ENCODE measurements at regions of chr6 and their contacts with region 1.

Region 1: DNA sequence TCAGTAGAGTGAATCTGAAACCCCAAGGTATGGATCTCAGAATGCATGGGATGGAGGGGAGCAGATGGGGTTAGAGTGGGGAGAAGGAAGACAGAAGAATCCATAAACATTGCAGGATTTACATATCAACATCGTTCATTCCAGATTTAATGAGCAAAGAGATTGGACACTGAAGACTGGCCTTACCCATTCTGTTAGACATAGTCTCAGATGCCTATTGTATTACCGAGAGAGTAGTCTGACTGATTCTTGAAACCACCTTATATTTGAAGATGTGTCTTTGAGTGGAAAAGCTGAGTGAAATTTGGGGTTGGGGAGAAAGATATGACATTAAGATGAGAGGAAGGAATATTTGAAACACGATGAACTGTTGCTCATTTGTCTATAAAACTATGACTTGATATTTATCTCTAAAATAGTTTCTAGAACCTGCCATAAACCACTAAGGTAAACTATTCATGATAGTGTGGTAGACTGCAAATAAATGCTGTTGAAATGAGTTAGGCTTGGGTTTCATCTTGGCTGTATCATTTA is 5.7 kb downstream of the HLA-DRA start:
- DNase-seq: no peak
- ATAC-seq: peak; percentile 44
- H3K4me3 ChIP-seq: no peak overlapping the region
- H3K27ac ChIP-seq: no peak overlapping the region
- H3K4me1 ChIP-seq: peaks cover 4% of the 10 kb centered on the region; the same call in 1 of the 2 replicates
- H3K27me3 ChIP-seq: no peaks in the 10 kb centered on the region
- CTCF ChIP-seq: no peak
- EP300 ChIP-seq: no peak
- POLR2A ChIP-seq: no peak; the same call in 1 of the 2 replicates
- RAD21 ChIP-seq: no peak

Region 2: DNA sequence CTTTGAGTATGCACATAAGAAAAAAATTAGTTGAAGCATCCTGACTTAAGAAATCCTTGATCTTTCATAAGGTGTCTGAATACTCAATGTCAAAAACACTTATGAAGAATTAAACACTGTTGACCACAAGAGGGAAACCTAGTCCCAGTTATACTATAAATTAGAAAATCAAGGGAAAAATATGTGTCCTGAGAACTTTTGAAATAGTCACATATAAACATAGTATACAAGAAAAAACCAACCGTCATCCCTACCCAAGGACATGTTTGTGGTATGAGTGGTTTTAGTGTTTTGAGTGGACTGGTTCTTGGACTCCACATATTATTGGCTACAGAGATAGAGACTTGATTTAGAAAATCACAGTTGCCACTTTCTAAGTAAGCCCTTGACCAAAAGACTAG is 13.3 kb before region 1 on chr6:
- CTCF ChIA-PET with region 1: interaction called, 8 read pairs
- POLR2A ChIA-PET with region 1: interaction called, 3 read pairs
- RAD21 ChIA-PET with region 1: interaction called, 10 read pairs
- SMC1A ChIA-PET with region 1: interaction called, 6 read pairs
- in situ Hi-C with region 1: no loop called
- intact Hi-C with region 1: no loop called
- DNase-seq: no peak
- ATAC-seq: peak; percentile 55
- H3K4me3 ChIP-seq: no peak overlapping the region
- H3K27ac ChIP-seq: no peak overlapping the region
- H3K4me1 ChIP-seq: peaks cover 10% of the 10 kb centered on the region
- H3K27me3 ChIP-seq: no peaks in the 10 kb centered on the region
- CTCF ChIP-seq: peak in 2 of 3 experiments; percentile 41 to 62; a peak in 4 of 6 replicates
- EP300 ChIP-seq: no peak
- POLR2A ChIP-seq: no peak
- RAD21 ChIP-seq: peak; percentile 76

Region 3: DNA sequence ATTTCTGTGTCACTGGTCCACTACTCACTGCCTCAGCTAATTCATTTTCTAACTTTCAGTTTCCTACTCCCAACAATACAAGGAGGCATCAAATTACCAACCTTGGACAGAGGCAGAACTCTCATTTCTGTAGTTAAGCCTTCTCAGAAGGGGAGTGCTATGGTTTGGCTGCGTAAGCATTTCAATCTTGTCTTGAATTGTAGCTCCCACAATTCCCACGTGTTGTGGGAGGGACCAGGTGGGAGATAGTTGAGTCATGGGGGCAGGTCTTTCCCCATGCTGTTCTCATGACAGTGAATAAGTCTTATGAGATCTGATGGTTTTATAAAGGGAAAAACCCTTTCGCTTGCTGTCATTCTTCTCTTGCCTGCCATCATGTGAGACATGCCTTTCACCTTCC is 17.2 kb after region 1 on chr6:
- CTCF ChIA-PET with region 1: interaction called, 47 read pairs
- POLR2A ChIA-PET with region 1: interaction called, 64 read pairs
- RAD21 ChIA-PET with region 1: interaction called, 23 read pairs
- SMC1A ChIA-PET with region 1: interaction called, 27 read pairs
- in situ Hi-C with region 1: no loop called
- intact Hi-C with region 1: no loop called
- DNase-seq: peak; percentile 76
- ATAC-seq: peak; percentile 94
- H3K4me3 ChIP-seq: no peak overlapping the region
- H3K27ac ChIP-seq: no peak overlapping the region
- H3K4me1 ChIP-seq: peaks cover 6% of the 10 kb centered on the region
- H3K27me3 ChIP-seq: no peaks in the 10 kb centered on the region
- CTCF ChIP-seq: no peak
- EP300 ChIP-seq: peak; percentile 13 to 74; a peak in 2 of 4 replicates
- POLR2A ChIP-seq: no peak
- RAD21 ChIP-seq: no peak

Measured in GM12878 (cell line).